ENCODE measurements at regions of chr13 and their contacts with region 1.

Region 1: DNA sequence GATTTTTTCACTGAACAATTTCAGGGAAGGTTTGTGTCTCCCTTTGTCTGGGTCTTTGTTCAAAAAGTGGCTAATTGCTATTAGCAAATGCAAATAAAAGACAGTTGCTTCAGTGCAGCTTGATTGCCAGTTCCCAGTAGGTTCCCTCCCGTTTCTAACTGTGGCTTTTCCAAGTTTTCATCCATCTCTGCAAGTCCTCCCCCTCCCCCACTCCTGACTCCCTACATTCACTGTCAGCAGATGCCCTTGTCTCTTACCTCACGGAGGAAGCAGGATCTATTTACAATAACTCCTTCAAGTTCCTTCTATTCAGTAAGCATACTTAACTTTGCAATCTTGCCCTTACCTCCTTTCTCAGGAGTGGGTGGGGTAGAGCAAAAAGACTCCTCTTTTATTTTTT is 55.4 kb upstream of the SCEL start:
- DNase-seq: no peak
- H3K4me3 ChIP-seq: no peak overlapping the region
- H3K27ac ChIP-seq: no peak overlapping the region
- H3K4me1 ChIP-seq: peaks cover 3% of the 10 kb centered on the region
- H3K27me3 ChIP-seq: peaks cover 3 to 12% of the 10 kb centered on the region in 2 experiments
- CTCF ChIP-seq: no peak
- POLR2A ChIP-seq: no peak

Region 2: GRCh38 chr13:76991796-76992547 is 488.1 kb before region 1 on chr13 and contains the start of gene CLN5:
- CTCF ChIA-PET with region 1: interaction called, 5 read pairs
- POLR2A ChIA-PET with region 1: no interaction called
- dilution Hi-C with region 1: no loop called
- intact Hi-C with region 1: loop called (anchors 1 kb)
- DNase-seq: peak; percentile 87
- H3K4me3 ChIP-seq: peak within 1 kb of the TSS; percentile 36 to 90 (median 83)
- H3K27ac ChIP-seq: peak within 1 kb of the TSS; percentile 40
- H3K4me1 ChIP-seq: peaks cover 13% of the 10 kb centered on the region
- H3K27me3 ChIP-seq: peaks cover 4% of the 10 kb centered on the region in 2 experiments
- CTCF ChIP-seq: no peak
- POLR2A ChIP-seq: peak; percentile 81
- total RNA-seq, gene CLN5: 22.7 and 22.8 TPM in 2 replicates

Region 3: DNA sequence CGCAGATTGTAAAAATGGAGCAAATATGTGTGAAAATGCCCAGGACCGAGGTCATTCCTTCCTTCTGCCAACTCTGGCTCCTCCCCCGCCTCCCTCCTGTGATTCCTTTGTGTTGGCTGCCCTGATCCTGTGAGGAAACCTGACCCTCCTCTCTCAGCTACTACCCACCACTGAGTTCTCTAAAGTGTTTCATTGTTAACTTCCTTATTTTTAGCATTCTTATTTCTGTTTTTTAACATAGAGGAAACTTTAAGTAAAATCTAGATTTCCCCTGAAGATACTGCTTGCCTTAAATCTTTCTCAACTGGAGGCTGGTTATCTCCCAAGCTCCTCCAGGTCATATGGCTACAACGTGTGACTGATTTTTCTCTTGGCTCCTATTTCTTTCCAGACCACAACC is 431.4 kb before region 1 on chr13:
- CTCF ChIA-PET with region 1: interaction called, 12 read pairs
- POLR2A ChIA-PET with region 1: no interaction called
- dilution Hi-C with region 1: no loop called
- intact Hi-C with region 1: no loop called
- DNase-seq: no peak
- H3K4me3 ChIP-seq: no peak overlapping the region
- H3K27ac ChIP-seq: no peak overlapping the region
- H3K4me1 ChIP-seq: no peaks in the 10 kb centered on the region
- H3K27me3 ChIP-seq: no peaks in the 10 kb centered on the region
- CTCF ChIP-seq: no peak
- POLR2A ChIP-seq: no peak

Region 4: DNA sequence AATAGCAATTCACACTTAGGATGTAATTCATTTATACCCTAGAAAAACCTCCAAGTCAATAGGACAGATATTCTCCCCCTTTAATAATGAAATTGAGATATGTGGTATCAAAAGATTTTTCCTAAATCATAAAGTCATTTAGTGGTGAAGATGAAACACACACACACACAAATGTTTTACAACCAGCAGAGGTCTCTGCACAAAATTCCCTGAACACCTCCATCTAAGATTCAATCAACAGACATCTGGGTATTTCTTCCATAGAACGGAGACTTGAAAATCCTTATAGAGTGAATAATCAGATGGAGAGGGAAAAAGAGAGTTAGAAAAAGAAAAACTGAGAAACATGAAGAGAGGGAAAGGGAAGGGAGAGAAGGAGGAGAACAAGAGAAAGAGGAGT is 205.9 kb before region 1 on chr13:
- CTCF ChIA-PET with region 1: interaction called, 4 read pairs
- POLR2A ChIA-PET with region 1: no interaction called
- dilution Hi-C with region 1: no loop called
- intact Hi-C with region 1: loop called (anchors 5 kb)
- DNase-seq: peak; percentile 6
- H3K4me3 ChIP-seq: no peak overlapping the region
- H3K27ac ChIP-seq: no peak overlapping the region
- H3K4me1 ChIP-seq: no peaks in the 10 kb centered on the region
- H3K27me3 ChIP-seq: no peaks in the 10 kb centered on the region
- CTCF ChIP-seq: no peak
- POLR2A ChIP-seq: no peak

Region 5: DNA sequence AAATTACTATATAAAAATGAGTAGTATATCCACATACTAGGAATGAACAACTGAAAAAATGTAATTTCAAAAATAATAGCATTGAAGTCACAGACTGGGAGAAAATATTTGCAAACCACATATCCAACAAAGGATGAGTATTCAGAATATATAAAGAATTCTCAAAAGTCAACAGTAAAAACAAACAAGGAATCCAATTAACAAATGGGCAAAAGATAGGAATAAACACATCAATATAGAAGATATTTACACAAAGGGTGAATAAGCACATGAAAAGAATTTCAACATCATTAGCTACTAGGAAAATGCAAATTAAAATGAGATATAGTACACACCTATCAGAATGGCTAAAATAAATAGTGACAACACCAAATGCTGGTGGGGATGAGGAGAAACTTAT is 190.2 kb before region 1 on chr13:
- CTCF ChIA-PET with region 1: no interaction called
- POLR2A ChIA-PET with region 1: no interaction called
- dilution Hi-C with region 1: no loop called
- intact Hi-C with region 1: no loop called
- DNase-seq: no peak
- H3K4me3 ChIP-seq: no peak overlapping the region
- H3K27ac ChIP-seq: no peak overlapping the region
- H3K4me1 ChIP-seq: no peaks in the 10 kb centered on the region
- H3K27me3 ChIP-seq: no peaks in the 10 kb centered on the region
- CTCF ChIP-seq: no peak
- POLR2A ChIP-seq: no peak

Region 6: DNA sequence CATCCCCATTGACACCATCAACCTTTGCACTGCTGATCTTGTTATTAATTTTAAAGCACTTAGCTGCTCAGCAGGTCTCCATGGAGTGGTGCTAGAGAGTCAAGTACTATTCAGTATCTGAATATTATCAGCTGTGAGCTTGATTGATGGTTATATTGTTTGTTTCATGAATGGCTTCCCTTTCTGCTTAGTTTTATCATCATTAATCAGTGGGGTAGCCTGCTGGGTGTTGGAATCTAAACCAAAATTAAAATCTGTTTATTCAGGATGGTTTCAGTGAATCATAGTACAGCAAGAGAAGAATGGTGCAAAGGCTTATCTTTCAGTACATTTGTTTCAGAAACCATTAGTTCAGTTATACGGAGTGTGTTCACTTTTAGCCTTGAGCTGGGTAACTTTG is 12.9 kb after region 1 on chr13:
- CTCF ChIA-PET with region 1: interaction called, 76 read pairs
- POLR2A ChIA-PET with region 1: no interaction called
- dilution Hi-C with region 1: no loop called
- intact Hi-C with region 1: no loop called
- DNase-seq: peak; percentile 96
- H3K4me3 ChIP-seq: no peak overlapping the region
- H3K27ac ChIP-seq: no peak overlapping the region
- H3K4me1 ChIP-seq: peaks cover 9% of the 10 kb centered on the region
- H3K27me3 ChIP-seq: peaks cover 2 to 12% of the 10 kb centered on the region in 2 experiments
- CTCF ChIP-seq: peak; percentile 44 to 60
- POLR2A ChIP-seq: peak; percentile 35

Region 7: GRCh38 chr13:77584106-77584505 is 104.0 kb after region 1 on chr13:
- CTCF ChIA-PET with region 1: interaction called, 11 read pairs
- POLR2A ChIA-PET with region 1: no interaction called
- dilution Hi-C with region 1: no loop called
- intact Hi-C with region 1: no loop called
- DNase-seq: no peak
- H3K4me3 ChIP-seq: no peak overlapping the region
- H3K27ac ChIP-seq: no peak overlapping the region
- H3K4me1 ChIP-seq: no peaks in the 10 kb centered on the region
- H3K27me3 ChIP-seq: no peaks in the 10 kb centered on the region
- CTCF ChIP-seq: no peak
- POLR2A ChIP-seq: no peak